Adrenal gland (tissue), 19 donors: ENCODE measurements at regions of chr22 and their contacts with region 1.

Region 1: GRCh38 chr22:35961480-35962295 is 66.9 kb downstream of the RBFOX2 start:
- DNase-seq: peak; percentile 16 to 68 (median 29)
- H3K4me3 ChIP-seq: peak overlapping the region in 1 of 4 donors; percentile 27
- H3K27ac ChIP-seq: peak overlapping the region in 2 of 5 donors; percentile 33 to 61
- H3K4me1 ChIP-seq: peaks cover 4 to 70% of the 10 kb centered on the region in 2 donors
- H3K27me3 ChIP-seq: no peaks in the 10 kb centered on the region
- CTCF ChIP-seq: no peak
- POLR2A ChIP-seq: no peak

Region 2: DNA sequence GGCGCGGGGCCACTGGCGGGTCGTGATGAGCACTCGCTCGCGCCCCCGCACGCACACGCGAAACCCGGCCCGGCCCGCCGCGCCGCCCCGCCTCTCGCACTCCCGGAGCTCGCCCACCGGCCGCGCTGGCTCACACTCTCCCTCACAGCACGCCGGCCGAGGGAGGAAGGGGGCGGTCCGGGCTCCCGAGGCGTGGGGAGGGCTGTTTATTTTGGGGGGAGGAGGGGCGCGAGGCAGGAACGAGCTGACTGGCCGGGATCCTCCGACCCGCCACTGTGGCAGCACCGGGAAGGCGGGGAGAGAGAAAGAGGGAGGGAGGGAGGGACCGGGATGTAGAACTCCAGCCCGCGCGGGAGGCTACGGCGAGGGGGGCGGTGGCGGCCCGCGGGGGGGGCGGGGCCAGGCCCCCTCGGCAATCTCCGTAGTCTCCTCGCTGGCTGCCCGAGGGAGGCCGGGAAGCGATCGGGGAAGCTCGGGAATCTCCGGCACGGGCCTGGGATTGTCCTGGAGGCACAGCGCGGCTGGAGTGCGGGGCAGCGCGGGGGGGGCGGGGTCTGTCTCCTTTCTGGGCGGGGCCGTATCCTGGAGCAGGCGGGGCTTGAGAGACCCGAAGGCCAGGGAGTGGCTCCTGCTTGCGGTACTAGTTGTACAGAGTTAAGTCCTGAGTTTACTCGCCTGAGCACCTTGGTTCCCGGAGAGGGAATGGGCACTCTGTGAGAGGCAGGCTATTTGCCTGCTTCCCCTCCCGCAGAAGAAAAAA is 67.1 kb after region 1 on chr22 and contains the start of gene RBFOX2:
- intact Hi-C with region 1: loop called in 1 of 2 experiments (anchors 10 kb)
- DNase-seq: peak; percentile 97 to 99 (median 98)
- H3K4me3 ChIP-seq: peak within 1 kb of the TSS; percentile 68 to 98 (median 76)
- H3K27ac ChIP-seq: peak within 1 kb of the TSS; percentile 42 to 96 (median 84)
- H3K4me1 ChIP-seq: peaks cover 7 to 11% of the 10 kb centered on the region in 2 donors
- H3K27me3 ChIP-seq: no peaks in the 10 kb centered on the region
- CTCF ChIP-seq: no peak
- POLR2A ChIP-seq: peak; percentile 46 to 56
- total RNA-seq, gene RBFOX2: 52.0 to 86.6 (median 76.9) TPM